B cell (primary cell): ENCODE measurements at regions of chr19 and their contacts with region 1.

Region 1: GRCh38 chr19:18251587-18252369 is 22.5 kb downstream of the IQCN start:
- DNase-seq: peak; percentile 88
- ATAC-seq: peak; percentile 74
- H3K4me3 ChIP-seq: no peak overlapping the region
- H3K4me3 Mint-ChIP-seq: no peak overlapping the region
- H3K27ac ChIP-seq: no peak overlapping the region
- H3K27ac Mint-ChIP-seq: peak overlapping the region; percentile 5
- H3K4me1 ChIP-seq: peaks cover 28 to 38% of the 10 kb centered on the region in 2 donors
- H3K4me1 Mint-ChIP-seq: peaks cover 29% of the 10 kb centered on the region
- H3K27me3 ChIP-seq: peaks cover 0 to 25% (median 2%) of the 10 kb centered on the region in 4 experiments
- H3K27me3 Mint-ChIP-seq: peaks cover 4% of the 10 kb centered on the region
- CTCF ChIP-seq: peak; percentile 87

Region 2: DNA sequence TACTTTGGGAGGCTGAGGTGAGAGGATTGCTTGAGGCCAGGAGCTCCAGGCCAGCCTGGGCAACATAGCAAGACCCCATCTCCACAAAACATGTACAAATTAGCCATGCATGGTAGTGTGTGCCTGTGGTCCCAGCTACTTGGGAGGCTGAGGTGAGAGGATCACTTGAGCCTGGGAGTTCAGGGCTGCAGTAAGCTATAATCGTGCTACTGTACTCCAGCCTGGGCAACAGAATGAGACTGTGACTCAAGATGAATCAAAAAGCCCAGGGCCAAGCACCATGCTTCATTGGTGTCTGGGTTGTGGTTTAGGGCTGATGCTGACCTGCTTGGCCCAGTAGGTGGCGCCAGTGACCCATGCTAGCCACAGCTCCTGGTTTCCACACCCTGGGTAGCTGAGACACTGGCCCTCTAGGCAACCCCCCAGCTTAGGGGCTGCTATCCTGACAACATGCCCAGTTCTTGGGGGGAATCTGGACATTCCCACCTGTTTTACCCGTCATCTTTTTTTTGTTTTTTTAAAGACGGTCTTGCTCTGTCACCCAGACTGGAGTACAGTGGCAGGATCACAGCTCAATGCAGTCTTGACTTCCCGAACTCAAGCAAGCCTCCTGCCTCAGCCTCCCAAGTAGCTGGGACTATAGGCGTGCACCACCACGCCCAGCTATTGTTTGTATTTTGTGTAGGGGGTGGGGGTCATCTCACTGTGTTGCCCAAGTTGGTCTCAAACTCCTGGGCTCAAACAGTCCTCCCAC is 313.5 kb before region 1 on chr19:
- CTCF ChIA-PET with region 1: interaction called, 17 read pairs
- POLR2A ChIA-PET with region 1: no interaction called
- intact Hi-C with region 1: loop called (anchors 1 kb)
- DNase-seq: peak; percentile 88
- ATAC-seq: peak; percentile 98
- H3K4me3 ChIP-seq: no peak overlapping the region
- H3K4me3 Mint-ChIP-seq: no peak overlapping the region
- H3K27ac ChIP-seq: no peak overlapping the region
- H3K27ac Mint-ChIP-seq: peak overlapping the region; percentile 41
- H3K4me1 ChIP-seq: peaks cover 5 to 10% of the 10 kb centered on the region in 2 donors
- H3K4me1 Mint-ChIP-seq: peaks cover 11% of the 10 kb centered on the region
- H3K27me3 ChIP-seq: no peaks in the 10 kb centered on the region
- H3K27me3 Mint-ChIP-seq: no peaks in the 10 kb centered on the region
- CTCF ChIP-seq: peak; percentile 94

Region 3: DNA sequence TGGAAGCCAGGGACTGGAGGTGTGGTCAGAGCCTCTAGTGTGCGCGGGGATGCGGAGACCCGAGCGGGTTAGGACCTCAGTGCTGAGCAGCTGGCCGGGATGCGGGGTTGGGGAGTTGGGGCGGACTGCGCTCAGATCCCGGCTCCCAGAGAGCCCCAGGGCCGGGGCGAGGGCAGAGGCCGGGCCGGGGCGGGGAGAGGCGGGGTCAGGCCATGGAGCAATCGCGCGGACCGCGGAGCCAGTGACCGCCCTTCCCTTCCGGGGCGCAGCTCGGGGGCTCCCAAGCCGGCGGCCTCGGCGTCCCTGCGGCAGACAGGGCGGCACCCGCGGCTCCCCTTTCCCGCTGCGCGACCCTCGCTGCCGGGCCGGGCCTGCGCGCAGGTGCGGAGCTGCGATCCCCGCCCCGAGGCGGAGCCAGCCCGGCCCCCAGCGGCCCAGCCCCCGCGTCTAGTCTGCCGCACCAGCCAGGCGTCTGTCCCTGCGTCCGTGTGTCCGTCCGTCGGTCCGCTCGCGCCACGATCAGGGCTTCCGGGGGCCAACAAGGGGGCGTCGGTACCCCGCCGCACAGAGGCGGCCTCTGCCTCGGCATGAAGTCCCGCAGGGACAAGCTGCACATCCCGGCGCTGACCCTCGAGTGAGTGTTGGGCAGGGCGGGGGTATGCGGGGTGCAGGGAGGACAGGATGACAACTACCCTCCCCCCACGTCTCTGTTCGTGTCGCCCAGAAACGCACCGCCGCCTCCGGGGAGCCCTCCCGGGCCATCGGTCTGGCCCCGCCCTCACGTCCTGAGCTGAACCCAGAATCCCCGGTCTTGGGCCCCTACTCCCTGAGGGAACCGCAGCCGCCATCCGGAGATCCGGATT is 141.8 kb before region 1 on chr19:
- CTCF ChIA-PET with region 1: interaction called, 21 read pairs
- POLR2A ChIA-PET with region 1: interaction called, 4 read pairs
- intact Hi-C with region 1: no loop called
- DNase-seq: peak; percentile 61
- ATAC-seq: peak; percentile 48
- H3K4me3 ChIP-seq: peak overlapping the region; percentile 22 to 71 (median 64)
- H3K4me3 Mint-ChIP-seq: peak overlapping the region; percentile 79
- H3K27ac ChIP-seq: peak overlapping the region; percentile 49 to 82
- H3K27ac Mint-ChIP-seq: peak overlapping the region; percentile 84
- H3K4me1 ChIP-seq: peaks cover 53 to 65% of the 10 kb centered on the region in 2 donors
- H3K4me1 Mint-ChIP-seq: peaks cover 65% of the 10 kb centered on the region
- H3K27me3 ChIP-seq: no peaks in the 10 kb centered on the region
- H3K27me3 Mint-ChIP-seq: no peaks in the 10 kb centered on the region
- CTCF ChIP-seq: no peak

Region 4: GRCh38 chr19:18160971-18161635 is 90.7 kb before region 1 on chr19:
- CTCF ChIA-PET with region 1: interaction called, 37 read pairs
- POLR2A ChIA-PET with region 1: interaction called, 4 read pairs
- intact Hi-C with region 1: no loop called
- DNase-seq: peak; percentile 90
- ATAC-seq: peak; percentile 97
- H3K4me3 ChIP-seq: peak overlapping the region in 4 of 5 experiments; percentile 13 to 51 (median 40)
- H3K4me3 Mint-ChIP-seq: peak overlapping the region; percentile 65
- H3K27ac ChIP-seq: no peak overlapping the region
- H3K27ac Mint-ChIP-seq: peak overlapping the region; percentile 76
- H3K4me1 ChIP-seq: peaks cover 13 to 19% of the 10 kb centered on the region in 2 donors
- H3K4me1 Mint-ChIP-seq: peaks cover 12% of the 10 kb centered on the region
- H3K27me3 ChIP-seq: no peaks in the 10 kb centered on the region
- H3K27me3 Mint-ChIP-seq: no peaks in the 10 kb centered on the region
- CTCF ChIP-seq: peak; percentile 70

Region 5: DNA sequence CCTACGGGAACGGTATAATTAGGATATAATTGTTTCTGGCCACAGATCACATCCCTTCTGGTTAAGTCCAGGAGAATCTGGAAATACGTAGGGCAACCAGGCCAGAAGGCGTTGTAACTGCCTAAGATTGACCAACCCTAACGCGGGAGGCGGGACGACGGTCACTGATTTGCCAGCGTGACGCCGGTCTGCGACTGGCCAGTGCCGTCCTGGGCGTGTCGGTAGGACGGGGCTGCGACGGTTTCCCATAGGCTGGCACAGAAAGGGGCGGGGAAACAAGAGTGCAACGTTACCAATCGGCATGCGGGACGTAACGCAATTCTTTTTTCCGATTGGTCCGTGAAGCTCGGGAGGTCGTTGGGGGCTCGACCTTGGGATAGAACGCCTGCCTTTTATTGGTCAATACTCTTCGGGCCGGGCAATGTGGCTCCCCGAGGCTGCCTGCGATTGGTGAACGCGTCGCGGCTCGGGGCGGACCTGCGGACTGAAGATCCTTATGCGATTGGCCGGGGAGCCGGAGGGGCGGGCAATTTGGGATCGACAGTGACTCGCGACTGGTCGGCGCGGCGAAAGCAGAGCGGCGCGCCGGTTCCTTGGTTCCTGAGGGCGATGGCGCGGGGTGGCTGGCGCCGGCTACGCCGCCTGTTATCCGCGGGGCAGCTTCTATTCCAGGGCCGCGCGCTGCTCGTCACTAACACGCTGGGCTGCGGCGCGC is 58.9 kb before region 1 on chr19 and contains the start of gene MPV17L2:
- CTCF ChIA-PET with region 1: interaction called, 105 read pairs
- POLR2A ChIA-PET with region 1: interaction called, 5 read pairs
- intact Hi-C with region 1: loop called (anchors 1 kb)
- DNase-seq: peak; percentile 100
- ATAC-seq: peak; percentile 83
- H3K4me3 ChIP-seq: peak within 1 kb of the TSS; percentile 76 to 92 (median 82)
- H3K4me3 Mint-ChIP-seq: peak within 1 kb of the TSS; percentile 93
- H3K27ac ChIP-seq: peak within 1 kb of the TSS; percentile 86 to 93
- H3K27ac Mint-ChIP-seq: peak within 1 kb of the TSS; percentile 97
- H3K4me1 ChIP-seq: peaks cover 25 to 40% of the 10 kb centered on the region in 2 donors
- H3K4me1 Mint-ChIP-seq: peaks cover 38% of the 10 kb centered on the region
- H3K27me3 ChIP-seq: no peaks in the 10 kb centered on the region
- H3K27me3 Mint-ChIP-seq: no peaks in the 10 kb centered on the region
- CTCF ChIP-seq: no peak
- total RNA-seq, gene MPV17L2: 6.5 and 8.6 TPM in 2 replicates

Region 6: GRCh38 chr19:18239303-18239702 is 12.5 kb before region 1 on chr19:
- CTCF ChIA-PET with region 1: interaction called, 37 read pairs
- POLR2A ChIA-PET with region 1: interaction called, 5 read pairs
- intact Hi-C with region 1: no loop called
- DNase-seq: no peak
- ATAC-seq: no peak
- H3K4me3 ChIP-seq: no peak overlapping the region
- H3K4me3 Mint-ChIP-seq: no peak overlapping the region
- H3K27ac ChIP-seq: no peak overlapping the region
- H3K27ac Mint-ChIP-seq: no peak overlapping the region
- H3K4me1 ChIP-seq: no peaks in the 10 kb centered on the region
- H3K4me1 Mint-ChIP-seq: no peaks in the 10 kb centered on the region
- H3K27me3 ChIP-seq: peaks cover 0 to 31% (median 8%) of the 10 kb centered on the region in 4 experiments
- H3K27me3 Mint-ChIP-seq: peaks cover 33% of the 10 kb centered on the region
- CTCF ChIP-seq: no peak